ENCODE measurements at regions of chr14 and their contacts with region 1.

Region 1: DNA sequence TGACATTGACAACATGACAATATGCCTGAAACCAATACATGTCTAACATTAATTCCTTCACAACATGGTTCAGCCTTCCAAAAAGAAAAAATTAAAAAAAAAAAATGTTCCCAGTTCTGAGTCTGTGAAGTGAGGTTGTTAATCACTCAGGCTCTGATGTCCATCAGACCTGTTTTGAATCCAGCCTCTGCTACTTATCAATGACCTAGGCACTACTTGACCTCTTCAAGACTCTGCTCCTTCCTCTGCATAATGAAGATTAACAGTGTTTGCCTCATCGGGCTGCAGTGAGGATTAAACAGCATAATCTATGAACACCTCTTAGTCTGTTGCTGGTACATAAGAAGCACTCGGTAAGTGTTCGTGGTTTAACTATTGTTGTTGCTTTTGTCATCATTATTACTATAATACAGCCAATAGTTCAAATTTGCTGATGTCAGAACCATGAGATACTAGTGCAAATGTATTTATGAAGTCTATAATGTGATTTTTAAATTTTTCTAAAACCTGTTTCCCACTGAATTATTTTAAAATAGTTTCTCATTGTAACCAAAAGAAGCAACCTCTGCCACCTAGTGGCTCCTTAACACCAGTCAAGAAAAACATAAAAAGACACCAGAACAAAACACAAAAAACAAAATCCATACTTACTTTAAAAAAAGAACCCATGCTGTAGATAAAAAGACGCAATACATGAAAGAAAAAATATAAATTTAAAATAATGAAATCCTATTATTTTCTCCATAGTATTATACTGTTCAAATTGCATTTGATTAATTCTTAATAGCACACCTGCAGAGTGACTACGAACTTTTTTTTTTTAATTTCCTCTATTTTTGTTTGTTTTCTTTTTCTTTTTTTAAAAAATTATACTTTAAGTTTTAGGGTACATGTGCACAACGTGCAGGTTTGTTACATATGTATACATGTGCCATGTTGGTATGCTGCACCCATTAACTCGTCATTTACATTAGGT is 20.3 kb upstream of the TMX1 start:
- DNase-seq: no peak
- H3K4me3 ChIP-seq: no peak overlapping the region
- H3K27ac ChIP-seq: no peak overlapping the region
- H3K4me1 ChIP-seq: no peaks in the 10 kb centered on the region
- H3K27me3 ChIP-seq: no peaks in the 10 kb centered on the region
- CTCF ChIP-seq: peak in 3 of 4 experiments; percentile 35 to 68 (median 63)
- POLR2A ChIP-seq: no peak

Region 2: DNA sequence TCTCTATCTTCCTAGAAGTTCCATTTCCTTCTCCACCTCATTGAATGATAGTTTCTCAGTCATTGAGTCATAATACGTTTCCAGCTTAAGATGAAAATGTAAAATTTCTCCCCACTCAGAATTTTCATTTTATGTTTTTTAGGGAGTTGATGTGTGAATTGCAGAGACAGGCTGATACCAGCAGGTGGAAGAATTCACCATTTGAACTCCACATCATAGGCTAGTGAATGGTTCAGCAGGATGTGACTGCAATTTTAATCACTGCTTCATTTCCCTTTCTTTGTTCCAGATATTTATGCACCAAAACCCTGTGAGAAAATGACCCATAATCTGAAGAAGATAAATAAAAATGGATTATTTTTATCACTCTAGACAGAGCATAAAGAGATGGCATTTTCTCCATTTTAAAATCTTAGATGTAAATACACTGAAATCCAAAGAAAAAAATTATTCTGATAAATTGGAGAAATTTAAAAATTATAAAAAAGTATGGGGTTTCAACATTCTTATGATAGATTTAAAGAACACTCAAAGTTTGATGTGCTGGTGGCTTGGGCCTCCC is 264.9 kb before region 1 on chr14:
- intact Hi-C with region 1: loop called (anchors 2 kb)
- DNase-seq: no peak
- H3K4me3 ChIP-seq: no peak overlapping the region
- H3K27ac ChIP-seq: no peak overlapping the region
- H3K4me1 ChIP-seq: no peaks in the 10 kb centered on the region
- H3K27me3 ChIP-seq: no peaks in the 10 kb centered on the region
- CTCF ChIP-seq: peak; percentile 18 to 70 (median 50)
- POLR2A ChIP-seq: no peak

Measured in prostate gland (tissue), 2 donors.